B cell (primary cell): ENCODE measurements at regions of chr17 and their contacts with region 1.

Region 1: GRCh38 chr17:7239091-7240027 is at the start of gene PHF23:
- DNase-seq: peak; percentile 98
- ATAC-seq: peak; percentile 64
- H3K4me3 ChIP-seq: peak within 1 kb of the TSS; percentile 74 to 97 (median 75)
- H3K4me3 Mint-ChIP-seq: peak within 1 kb of the TSS; percentile 98
- H3K27ac ChIP-seq: peak within 1 kb of the TSS; percentile 55 to 97
- H3K27ac Mint-ChIP-seq: peak within 1 kb of the TSS; percentile 100
- H3K4me1 ChIP-seq: peaks cover 42 to 49% of the 10 kb centered on the region in 2 donors
- H3K4me1 Mint-ChIP-seq: peaks cover 61% of the 10 kb centered on the region
- H3K27me3 ChIP-seq: no peaks in the 10 kb centered on the region
- H3K27me3 Mint-ChIP-seq: no peaks in the 10 kb centered on the region
- CTCF ChIP-seq: no peak
- total RNA-seq, gene PHF23: 42.3 and 45.8 TPM in 2 replicates

Region 2: DNA sequence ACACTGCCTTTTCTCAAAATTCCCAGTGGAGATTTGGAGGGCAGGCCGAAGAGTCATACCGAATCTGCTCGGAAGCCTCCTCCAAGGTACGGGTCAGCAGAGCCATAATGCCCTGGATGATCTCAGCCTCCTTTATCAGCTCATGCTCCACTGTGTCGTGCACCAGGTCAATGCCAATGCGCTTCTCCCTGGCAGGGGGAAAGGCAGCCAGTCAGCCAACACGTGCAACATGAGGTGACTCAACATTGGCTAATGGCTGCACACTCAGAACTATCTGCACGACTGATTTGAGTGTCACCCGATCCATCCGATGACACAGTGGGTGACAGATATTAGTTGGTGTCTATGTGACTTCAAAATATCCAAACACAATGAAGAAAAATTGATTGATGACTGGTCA is 423.6 kb before region 1 on chr17:
- CTCF ChIA-PET with region 1: no interaction called
- POLR2A ChIA-PET with region 1: no interaction called
- intact Hi-C with region 1: no loop called
- DNase-seq: no peak
- ATAC-seq: no peak
- H3K4me3 ChIP-seq: no peak overlapping the region
- H3K4me3 Mint-ChIP-seq: no peak overlapping the region
- H3K27ac ChIP-seq: no peak overlapping the region
- H3K27ac Mint-ChIP-seq: no peak overlapping the region
- H3K4me1 ChIP-seq: no peaks in the 10 kb centered on the region
- H3K4me1 Mint-ChIP-seq: no peaks in the 10 kb centered on the region
- H3K27me3 ChIP-seq: peaks cover 0 to 6% (median 1%) of the 10 kb centered on the region in 4 experiments
- H3K27me3 Mint-ChIP-seq: peaks cover 28% of the 10 kb centered on the region
- CTCF ChIP-seq: no peak

Region 3: GRCh38 chr17:7014261-7014994 is 224.9 kb before region 1 on chr17:
- CTCF ChIA-PET with region 1: no interaction called
- POLR2A ChIA-PET with region 1: interaction called, 4 read pairs
- intact Hi-C with region 1: loop called (anchors 1 kb)
- DNase-seq: peak; percentile 99
- ATAC-seq: peak; percentile 81
- H3K4me3 ChIP-seq: peak overlapping the region; percentile 95 to 100 (median 96)
- H3K4me3 Mint-ChIP-seq: peak overlapping the region; percentile 99
- H3K27ac ChIP-seq: peak overlapping the region; percentile 97 to 99
- H3K27ac Mint-ChIP-seq: peak overlapping the region; percentile 100
- H3K4me1 ChIP-seq: peaks cover 40 to 59% of the 10 kb centered on the region in 2 donors
- H3K4me1 Mint-ChIP-seq: peaks cover 54% of the 10 kb centered on the region
- H3K27me3 ChIP-seq: no peaks in the 10 kb centered on the region
- H3K27me3 Mint-ChIP-seq: no peaks in the 10 kb centered on the region
- CTCF ChIP-seq: peak; percentile 76

Region 4: GRCh38 chr17:7204828-7205461 is 34.4 kb before region 1 on chr17:
- CTCF ChIA-PET with region 1: no interaction called
- POLR2A ChIA-PET with region 1: interaction called, 4 read pairs
- intact Hi-C with region 1: loop called (anchors 1 kb)
- DNase-seq: peak; percentile 99
- ATAC-seq: peak; percentile 85
- H3K4me3 ChIP-seq: peak overlapping the region in 4 of 5 experiments; percentile 49 to 65 (median 55)
- H3K4me3 Mint-ChIP-seq: peak overlapping the region; percentile 82
- H3K27ac ChIP-seq: peak overlapping the region; percentile 86 to 93
- H3K27ac Mint-ChIP-seq: peak overlapping the region; percentile 91
- H3K4me1 ChIP-seq: peaks cover 17 to 25% of the 10 kb centered on the region in 2 donors
- H3K4me1 Mint-ChIP-seq: peaks cover 28% of the 10 kb centered on the region
- H3K27me3 ChIP-seq: no peaks in the 10 kb centered on the region
- H3K27me3 Mint-ChIP-seq: peaks cover under 1% of the 10 kb centered on the region
- CTCF ChIP-seq: no peak

Region 5: GRCh38 chr17:7214300-7215135 is 24.8 kb before region 1 on chr17:
- CTCF ChIA-PET with region 1: interaction called, 36 read pairs
- POLR2A ChIA-PET with region 1: interaction called, 157 read pairs
- intact Hi-C with region 1: loop called (anchors 1 kb)
- DNase-seq: peak; percentile 99
- ATAC-seq: peak; percentile 85
- H3K4me3 ChIP-seq: peak overlapping the region; percentile 39 to 66 (median 53)
- H3K4me3 Mint-ChIP-seq: peak overlapping the region; percentile 97
- H3K27ac ChIP-seq: peak overlapping the region; percentile 77 to 90
- H3K27ac Mint-ChIP-seq: peak overlapping the region; percentile 99
- H3K4me1 ChIP-seq: peaks cover 25 to 50% of the 10 kb centered on the region in 2 donors
- H3K4me1 Mint-ChIP-seq: peaks cover 49% of the 10 kb centered on the region
- H3K27me3 ChIP-seq: peaks cover 0 to 4% (median 0%) of the 10 kb centered on the region in 4 experiments
- H3K27me3 Mint-ChIP-seq: peaks cover 5% of the 10 kb centered on the region
- CTCF ChIP-seq: peak; percentile 44

Region 6: DNA sequence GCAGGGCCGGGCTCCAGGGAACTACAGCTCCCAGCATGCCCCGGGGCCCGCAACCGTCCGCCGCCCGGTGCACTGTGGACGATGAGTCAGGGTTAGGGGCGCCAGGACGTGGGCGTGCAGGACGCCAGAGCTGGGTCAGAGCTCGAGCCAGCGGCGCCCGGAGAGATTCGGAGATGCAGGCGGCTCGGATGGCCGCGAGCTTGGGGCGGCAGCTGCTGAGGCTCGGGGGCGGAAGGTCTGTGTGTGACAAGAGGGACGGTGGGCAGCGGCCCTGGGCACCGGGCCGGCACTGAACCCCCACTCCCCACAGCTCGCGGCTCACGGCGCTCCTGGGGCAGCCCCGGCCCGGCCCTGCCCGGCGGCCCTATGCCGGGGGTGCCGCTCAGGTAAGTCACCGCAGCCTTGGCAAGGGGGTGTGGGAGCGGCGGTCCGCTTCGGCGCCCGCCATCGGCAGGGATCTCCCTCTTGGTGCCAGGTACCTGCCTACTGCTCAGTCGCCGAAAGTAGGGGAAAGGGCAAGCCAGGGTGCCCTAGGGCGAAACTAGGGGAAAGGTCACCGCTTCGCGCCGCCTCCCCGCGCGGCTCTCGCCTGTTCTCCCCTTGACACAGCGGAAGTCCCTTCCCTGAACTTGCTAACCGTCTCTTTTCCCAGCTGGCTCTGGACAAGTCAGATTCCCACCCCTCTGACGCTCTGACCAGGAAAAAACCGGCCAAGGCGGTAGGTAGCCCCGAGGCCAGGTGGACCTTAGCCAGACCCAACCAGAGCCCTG is 19.4 kb before region 1 on chr17 and contains the starts of genes ACADVL and DLG4:
- CTCF ChIA-PET with region 1: interaction called, 36 read pairs
- POLR2A ChIA-PET with region 1: interaction called, 157 read pairs
- intact Hi-C with region 1: loop called (anchors 1 kb)
- DNase-seq: peak; percentile 78
- ATAC-seq: peak; percentile 76
- H3K4me3 ChIP-seq: peak within 1 kb of the TSS; percentile 31 to 86 (median 80)
- H3K4me3 Mint-ChIP-seq: peak within 1 kb of the TSS; percentile 97
- H3K27ac ChIP-seq: peak within 1 kb of the TSS; percentile 42 to 78
- H3K27ac Mint-ChIP-seq: peak within 1 kb of the TSS; percentile 93
- H3K4me1 ChIP-seq: peaks cover 20 to 47% of the 10 kb centered on the region in 2 donors
- H3K4me1 Mint-ChIP-seq: peaks cover 48% of the 10 kb centered on the region
- H3K27me3 ChIP-seq: no peaks in the 10 kb centered on the region
- H3K27me3 Mint-ChIP-seq: no peaks in the 10 kb centered on the region
- CTCF ChIP-seq: no peak
- total RNA-seq, gene ACADVL: 640 and 655 TPM in 2 replicates
- total RNA-seq, gene DLG4: 12.0 and 12.5 TPM in 2 replicates

Region 7: GRCh38 chr17:7252176-7253043 is 13.1 kb after region 1 on chr17 and contains the start of gene ELP5:
- CTCF ChIA-PET with region 1: interaction called, 6 read pairs
- POLR2A ChIA-PET with region 1: interaction called, 26 read pairs
- intact Hi-C with region 1: no loop called
- DNase-seq: peak; percentile 100
- ATAC-seq: peak; percentile 64
- H3K4me3 ChIP-seq: peak within 1 kb of the TSS; percentile 69 to 90 (median 78)
- H3K4me3 Mint-ChIP-seq: peak within 1 kb of the TSS; percentile 98
- H3K27ac ChIP-seq: peak within 1 kb of the TSS; percentile 98 to 100
- H3K27ac Mint-ChIP-seq: peak within 1 kb of the TSS; percentile 100
- H3K4me1 ChIP-seq: peaks cover 30 to 33% of the 10 kb centered on the region in 2 donors
- H3K4me1 Mint-ChIP-seq: peaks cover 44% of the 10 kb centered on the region
- H3K27me3 ChIP-seq: no peaks in the 10 kb centered on the region
- H3K27me3 Mint-ChIP-seq: no peaks in the 10 kb centered on the region
- CTCF ChIP-seq: no peak
- total RNA-seq, gene ELP5: 42.2 and 48.0 TPM in 2 replicates

Region 8: GRCh38 chr17:7296189-7296902 is 57.0 kb after region 1 on chr17:
- CTCF ChIA-PET with region 1: interaction called, 14 read pairs
- POLR2A ChIA-PET with region 1: no interaction called
- intact Hi-C with region 1: no loop called
- DNase-seq: peak; percentile 84
- ATAC-seq: peak; percentile 58
- H3K4me3 ChIP-seq: peak overlapping the region in 2 of 5 experiments; percentile 12 to 14
- H3K4me3 Mint-ChIP-seq: peak overlapping the region; percentile 83
- H3K27ac ChIP-seq: no peak overlapping the region
- H3K27ac Mint-ChIP-seq: peak overlapping the region; percentile 47
- H3K4me1 ChIP-seq: peaks cover 28 to 30% of the 10 kb centered on the region in 2 donors
- H3K4me1 Mint-ChIP-seq: peaks cover 22% of the 10 kb centered on the region
- H3K27me3 ChIP-seq: peaks cover 0 to 52% (median 14%) of the 10 kb centered on the region in 4 experiments
- H3K27me3 Mint-ChIP-seq: peaks cover 36% of the 10 kb centered on the region
- CTCF ChIP-seq: peak; percentile 93

Region 9: GRCh38 chr17:7383742-7384488 is 144.6 kb after region 1 on chr17:
- CTCF ChIA-PET with region 1: no interaction called
- POLR2A ChIA-PET with region 1: no interaction called
- intact Hi-C with region 1: no loop called
- DNase-seq: peak; percentile 91
- ATAC-seq: peak; percentile 97
- H3K4me3 ChIP-seq: peak overlapping the region in 4 of 5 experiments; percentile 70 to 78 (median 76)
- H3K4me3 Mint-ChIP-seq: peak overlapping the region; percentile 89
- H3K27ac ChIP-seq: peak overlapping the region; percentile 60 to 72
- H3K27ac Mint-ChIP-seq: peak overlapping the region; percentile 91
- H3K4me1 ChIP-seq: peaks cover 19% of the 10 kb centered on the region in 2 donors
- H3K4me1 Mint-ChIP-seq: peaks cover 14% of the 10 kb centered on the region
- H3K27me3 ChIP-seq: peaks cover 0 to 43% (median 14%) of the 10 kb centered on the region in 4 experiments
- H3K27me3 Mint-ChIP-seq: peaks cover 32% of the 10 kb centered on the region
- CTCF ChIP-seq: no peak

Region 10: GRCh38 chr17:7413346-7413985 is 174.1 kb after region 1 on chr17:
- CTCF ChIA-PET with region 1: no interaction called
- POLR2A ChIA-PET with region 1: no interaction called
- intact Hi-C with region 1: no loop called
- DNase-seq: no peak
- ATAC-seq: no peak
- H3K4me3 ChIP-seq: no peak overlapping the region
- H3K4me3 Mint-ChIP-seq: no peak overlapping the region
- H3K27ac ChIP-seq: no peak overlapping the region
- H3K27ac Mint-ChIP-seq: no peak overlapping the region
- H3K4me1 ChIP-seq: peaks cover 0 to 4% of the 10 kb centered on the region in 2 donors
- H3K4me1 Mint-ChIP-seq: peaks cover 2% of the 10 kb centered on the region
- H3K27me3 ChIP-seq: peaks cover 0 to 13% (median 0%) of the 10 kb centered on the region in 4 experiments
- H3K27me3 Mint-ChIP-seq: peaks cover 22% of the 10 kb centered on the region
- CTCF ChIP-seq: no peak